Caco-2 (cell line): ENCODE measurements at regions of chr1 and their contacts with region 1.

Region 1: GRCh38 chr1:118304722-118305359 is 119.8 kb upstream of the SPAG17 start:
- DNase-seq: peak in 1 of 2 experiments; percentile 10
- H3K4me3 ChIP-seq: no peak overlapping the region
- H3K4me3 Mint-ChIP-seq: no peak overlapping the region
- H3K27ac Mint-ChIP-seq: no peak overlapping the region
- H3K4me1 ChIP-seq: no peaks in the 10 kb centered on the region
- H3K4me1 Mint-ChIP-seq: no peaks in the 10 kb centered on the region
- H3K27me3 ChIP-seq: no peaks in the 10 kb centered on the region
- H3K27me3 Mint-ChIP-seq: no peaks in the 10 kb centered on the region
- CTCF ChIP-seq: peak; percentile 29 to 57

Region 2: DNA sequence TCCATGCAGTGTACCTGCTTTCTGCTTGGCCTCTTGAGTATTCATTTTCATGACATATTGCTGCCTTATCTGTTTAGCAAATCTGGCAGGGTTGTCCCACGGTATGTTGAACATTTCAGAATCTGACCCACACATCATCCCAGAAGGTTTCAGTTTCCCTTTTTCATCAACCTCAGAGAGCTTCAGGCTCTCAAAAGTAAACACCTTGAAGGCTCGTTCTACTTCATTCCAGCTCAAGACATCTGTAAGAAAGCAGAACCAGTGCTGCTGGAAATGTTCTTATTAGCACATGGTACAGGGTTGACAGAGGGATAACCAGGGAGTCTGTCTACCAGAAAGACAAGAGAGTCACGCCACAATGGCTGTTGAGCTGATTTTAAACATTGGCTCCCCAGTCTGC is 223.4 kb before region 1 on chr1:
- CTCF ChIA-PET with region 1: no interaction called
- POLR2A ChIA-PET with region 1: no interaction called
- intact Hi-C with region 1: no loop called
- DNase-seq: peak in 1 of 2 experiments; percentile 3
- H3K4me3 ChIP-seq: no peak overlapping the region
- H3K4me3 Mint-ChIP-seq: peak overlapping the region; percentile 12
- H3K27ac Mint-ChIP-seq: no peak overlapping the region
- H3K4me1 ChIP-seq: no peaks in the 10 kb centered on the region
- H3K4me1 Mint-ChIP-seq: peaks cover 9% of the 10 kb centered on the region
- H3K27me3 ChIP-seq: no peaks in the 10 kb centered on the region
- H3K27me3 Mint-ChIP-seq: peaks cover 4% of the 10 kb centered on the region
- CTCF ChIP-seq: no peak

Region 3: GRCh38 chr1:118136187-118136941 is 168.5 kb before region 1 on chr1:
- CTCF ChIA-PET with region 1: no interaction called
- POLR2A ChIA-PET with region 1: no interaction called
- intact Hi-C with region 1: no loop called
- DNase-seq: no peak
- H3K4me3 ChIP-seq: no peak overlapping the region
- H3K4me3 Mint-ChIP-seq: no peak overlapping the region
- H3K27ac Mint-ChIP-seq: no peak overlapping the region
- H3K4me1 ChIP-seq: no peaks in the 10 kb centered on the region
- H3K4me1 Mint-ChIP-seq: no peaks in the 10 kb centered on the region
- H3K27me3 ChIP-seq: no peaks in the 10 kb centered on the region
- H3K27me3 Mint-ChIP-seq: peaks cover 7% of the 10 kb centered on the region
- CTCF ChIP-seq: no peak

Region 4: DNA sequence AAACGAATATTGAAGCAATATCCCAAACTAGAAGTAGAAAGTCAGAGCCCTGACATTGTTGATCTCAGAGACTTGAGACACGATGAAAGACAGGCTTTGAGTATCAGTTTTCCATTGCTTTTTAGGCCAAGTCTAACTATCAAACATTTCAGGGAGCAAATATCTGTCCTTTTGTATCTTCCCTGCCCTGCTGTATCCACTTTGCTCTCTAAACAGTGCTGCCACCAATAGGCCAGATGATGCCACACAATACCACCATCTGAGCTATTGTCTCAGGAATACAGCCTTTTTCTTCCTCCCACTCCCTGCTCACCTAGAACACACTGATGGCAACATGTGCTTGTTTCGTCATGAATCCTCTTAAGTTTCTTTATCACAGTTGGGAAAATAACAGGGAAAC is 57.2 kb before region 1 on chr1:
- CTCF ChIA-PET with region 1: no interaction called
- POLR2A ChIA-PET with region 1: no interaction called
- intact Hi-C with region 1: loop called (anchors 5 kb)
- DNase-seq: peak in 1 of 2 experiments; percentile 7
- H3K4me3 ChIP-seq: no peak overlapping the region
- H3K4me3 Mint-ChIP-seq: no peak overlapping the region
- H3K27ac Mint-ChIP-seq: no peak overlapping the region
- H3K4me1 ChIP-seq: no peaks in the 10 kb centered on the region
- H3K4me1 Mint-ChIP-seq: no peaks in the 10 kb centered on the region
- H3K27me3 ChIP-seq: no peaks in the 10 kb centered on the region
- H3K27me3 Mint-ChIP-seq: no peaks in the 10 kb centered on the region
- CTCF ChIP-seq: peak in 1 of 2 experiments; percentile 20

Region 5: DNA sequence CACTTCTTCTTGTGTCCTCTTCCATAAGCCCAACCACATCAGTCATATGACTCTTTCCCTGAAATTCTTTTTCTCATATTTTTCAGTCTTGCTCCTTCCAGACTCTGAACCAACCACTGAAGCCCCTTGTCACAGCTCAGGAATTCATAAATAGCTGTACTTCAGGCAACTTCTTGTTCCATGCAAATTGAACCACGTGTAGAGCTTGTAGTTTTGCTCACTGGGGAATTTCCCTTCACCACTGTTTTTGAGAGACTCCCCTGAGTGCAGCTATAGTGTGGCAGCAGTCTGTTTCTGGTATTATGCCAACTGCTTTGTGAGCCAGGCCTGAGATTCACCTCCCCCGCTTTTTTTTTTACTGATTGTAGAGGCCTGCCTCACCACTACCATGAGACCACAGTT is 30.5 kb after region 1 on chr1:
- CTCF ChIA-PET with region 1: no interaction called
- POLR2A ChIA-PET with region 1: no interaction called
- intact Hi-C with region 1: no loop called
- DNase-seq: no peak
- H3K4me3 ChIP-seq: no peak overlapping the region
- H3K4me3 Mint-ChIP-seq: no peak overlapping the region
- H3K27ac Mint-ChIP-seq: no peak overlapping the region
- H3K4me1 ChIP-seq: no peaks in the 10 kb centered on the region
- H3K4me1 Mint-ChIP-seq: peaks cover 5% of the 10 kb centered on the region
- H3K27me3 ChIP-seq: no peaks in the 10 kb centered on the region
- H3K27me3 Mint-ChIP-seq: no peaks in the 10 kb centered on the region
- CTCF ChIP-seq: no peak

Region 6: DNA sequence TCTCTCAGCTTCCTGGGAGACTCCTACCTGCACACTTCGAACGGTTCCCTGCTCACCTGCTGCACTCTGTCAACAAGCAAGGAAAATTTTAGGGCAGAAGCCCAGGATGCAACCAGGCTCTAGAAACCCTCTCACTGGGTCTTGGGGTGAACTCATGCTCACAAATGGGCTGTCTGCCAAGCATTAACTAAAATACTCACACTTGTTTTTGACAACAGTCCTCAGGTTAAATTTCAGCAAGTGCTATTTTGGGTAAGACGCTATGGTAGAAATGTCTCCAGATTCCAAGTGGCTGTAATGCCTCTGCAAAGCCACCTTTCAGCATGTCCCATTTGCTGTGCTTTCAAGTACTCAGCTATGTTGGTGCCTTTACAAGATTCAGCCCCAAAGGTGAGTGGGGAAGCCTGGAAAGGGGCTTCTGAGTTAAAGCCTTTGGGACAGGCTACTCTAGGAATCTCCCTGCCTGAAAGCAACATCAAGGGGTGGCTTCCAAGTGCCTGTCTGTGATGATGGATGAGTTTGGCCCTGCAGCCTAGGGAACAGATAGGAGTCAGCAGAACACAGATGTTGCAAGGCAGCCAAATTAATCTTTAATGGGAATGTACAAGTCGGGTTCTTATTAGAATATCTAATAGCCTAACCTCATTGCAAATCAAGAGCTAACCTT is 92.1 kb after region 1 on chr1:
- CTCF ChIA-PET with region 1: no interaction called
- POLR2A ChIA-PET with region 1: no interaction called
- intact Hi-C with region 1: no loop called
- DNase-seq: no peak
- H3K4me3 ChIP-seq: no peak overlapping the region
- H3K4me3 Mint-ChIP-seq: no peak overlapping the region
- H3K27ac Mint-ChIP-seq: no peak overlapping the region
- H3K4me1 ChIP-seq: no peaks in the 10 kb centered on the region
- H3K4me1 Mint-ChIP-seq: no peaks in the 10 kb centered on the region
- H3K27me3 ChIP-seq: no peaks in the 10 kb centered on the region
- H3K27me3 Mint-ChIP-seq: no peaks in the 10 kb centered on the region
- CTCF ChIP-seq: no peak